ENCODE measurements at regions of chr9 and their contacts with region 1.

Region 1: DNA sequence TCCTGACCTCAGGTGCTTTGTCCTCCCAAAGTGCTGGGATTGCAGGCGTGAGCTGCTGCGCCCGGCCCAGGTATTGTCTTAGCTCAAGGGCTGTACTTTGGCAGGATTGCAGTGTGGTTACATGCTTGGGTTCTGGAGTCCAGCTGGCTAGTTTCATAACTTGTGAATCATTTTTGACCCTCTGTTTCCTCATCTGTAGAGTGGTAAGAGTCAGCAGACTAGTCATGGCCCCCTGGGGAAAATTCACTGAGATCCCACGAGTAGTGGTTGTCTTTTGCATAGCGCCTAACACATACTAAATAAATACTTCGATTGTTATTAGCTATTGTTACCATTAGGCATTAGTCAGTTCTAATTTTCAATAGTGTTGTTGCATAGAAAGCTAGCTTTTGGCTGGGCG is 14.3 kb downstream of the PTPA start:
- DNase-seq: peak; percentile 69
- ATAC-seq: peak; percentile 15; the same call in 1 of the 2 replicates
- H3K4me3 ChIP-seq: no peak overlapping the region
- H3K27ac ChIP-seq: peak overlapping the region; percentile 20; the same call in 1 of the 2 replicates
- H3K4me1 ChIP-seq: peaks cover 6% of the 10 kb centered on the region; the same call in 1 of the 2 replicates
- H3K27me3 ChIP-seq: no peaks in the 10 kb centered on the region
- CTCF ChIP-seq: no peak

Region 2: DNA sequence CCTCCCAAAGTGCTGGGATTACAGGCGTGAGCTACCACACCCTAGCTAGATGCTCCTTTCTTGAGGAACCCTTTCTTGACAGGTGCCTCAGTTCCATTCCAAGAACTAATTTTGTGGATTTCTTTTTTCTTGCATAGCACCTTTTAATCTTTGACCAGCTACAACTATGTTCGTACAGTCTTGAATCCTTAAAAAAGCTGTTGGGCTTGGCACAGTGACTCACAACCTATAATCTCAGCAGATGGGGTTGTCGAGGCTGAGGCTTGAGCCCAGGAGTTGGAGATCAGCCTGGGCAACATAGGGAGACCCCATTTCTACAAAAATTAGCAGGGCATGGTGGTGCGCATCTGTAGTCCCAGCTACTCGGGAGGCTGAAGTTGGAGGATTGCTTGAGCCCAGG is 352.4 kb before region 1 on chr9:
- CTCF ChIA-PET with region 1: no interaction called
- POLR2A ChIA-PET with region 1: interaction called, 11 read pairs
- intact Hi-C with region 1: no loop called
- DNase-seq: no peak
- ATAC-seq: no peak
- H3K4me3 ChIP-seq: no peak overlapping the region
- H3K27ac ChIP-seq: no peak overlapping the region
- H3K4me1 ChIP-seq: peaks cover 5% of the 10 kb centered on the region; the same call in 1 of the 2 replicates
- H3K27me3 ChIP-seq: no peaks in the 10 kb centered on the region
- CTCF ChIP-seq: no peak